ENCODE measurements at regions of chr19 and their contacts with region 1.

Region 1: GRCh38 chr19:7348587-7349230 is at the start of gene ARHGEF18:
- DNase-seq: peak; percentile 56
- ATAC-seq: peak; percentile 36
- H3K4me3 Mint-ChIP-seq: peak within 1 kb of the TSS; percentile 87
- H3K27ac Mint-ChIP-seq: peak within 1 kb of the TSS; percentile 95
- H3K4me1 Mint-ChIP-seq: peaks cover 90% of the 10 kb centered on the region
- H3K27me3 Mint-ChIP-seq: no peaks in the 10 kb centered on the region
- CTCF ChIP-seq: no peak
- total RNA-seq, gene ARHGEF18: 45.8 and 51.9 TPM in 2 replicates

Region 2: DNA sequence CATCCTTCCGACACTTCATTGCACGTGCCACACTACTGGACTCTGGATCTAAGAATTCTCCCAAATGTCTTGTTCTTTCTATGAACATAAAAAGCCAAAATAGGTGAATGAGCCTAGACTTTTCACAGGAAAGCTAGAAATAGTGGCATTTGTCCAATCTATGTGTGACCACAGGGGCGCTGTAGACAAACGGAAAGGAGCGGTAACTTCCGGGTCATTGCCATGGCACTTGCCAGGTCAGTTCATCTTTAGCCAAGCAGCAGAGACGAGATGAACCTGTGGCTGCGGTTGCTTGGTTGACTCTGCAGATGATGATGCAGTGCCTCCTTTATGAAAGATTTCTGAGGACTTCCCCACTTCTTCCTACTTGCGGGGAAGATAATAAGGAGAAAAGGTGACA is 395.8 kb before region 1 on chr19:
- CTCF ChIA-PET with region 1: no interaction called
- POLR2A ChIA-PET with region 1: no interaction called
- intact Hi-C with region 1: no loop called
- DNase-seq: no peak
- ATAC-seq: no peak
- H3K4me3 Mint-ChIP-seq: no peak overlapping the region
- H3K27ac Mint-ChIP-seq: no peak overlapping the region
- H3K4me1 Mint-ChIP-seq: no peaks in the 10 kb centered on the region
- H3K27me3 Mint-ChIP-seq: peaks cover 22% of the 10 kb centered on the region
- CTCF ChIP-seq: no peak

Region 3: GRCh38 chr19:7575434-7576040 is 226.8 kb after region 1 on chr19:
- CTCF ChIA-PET with region 1: no interaction called
- POLR2A ChIA-PET with region 1: no interaction called
- intact Hi-C with region 1: no loop called
- DNase-seq: no peak
- ATAC-seq: no peak
- H3K4me3 Mint-ChIP-seq: no peak overlapping the region
- H3K27ac Mint-ChIP-seq: no peak overlapping the region
- H3K4me1 Mint-ChIP-seq: no peaks in the 10 kb centered on the region
- H3K27me3 Mint-ChIP-seq: peaks cover 5% of the 10 kb centered on the region
- CTCF ChIP-seq: no peak

Region 4: DNA sequence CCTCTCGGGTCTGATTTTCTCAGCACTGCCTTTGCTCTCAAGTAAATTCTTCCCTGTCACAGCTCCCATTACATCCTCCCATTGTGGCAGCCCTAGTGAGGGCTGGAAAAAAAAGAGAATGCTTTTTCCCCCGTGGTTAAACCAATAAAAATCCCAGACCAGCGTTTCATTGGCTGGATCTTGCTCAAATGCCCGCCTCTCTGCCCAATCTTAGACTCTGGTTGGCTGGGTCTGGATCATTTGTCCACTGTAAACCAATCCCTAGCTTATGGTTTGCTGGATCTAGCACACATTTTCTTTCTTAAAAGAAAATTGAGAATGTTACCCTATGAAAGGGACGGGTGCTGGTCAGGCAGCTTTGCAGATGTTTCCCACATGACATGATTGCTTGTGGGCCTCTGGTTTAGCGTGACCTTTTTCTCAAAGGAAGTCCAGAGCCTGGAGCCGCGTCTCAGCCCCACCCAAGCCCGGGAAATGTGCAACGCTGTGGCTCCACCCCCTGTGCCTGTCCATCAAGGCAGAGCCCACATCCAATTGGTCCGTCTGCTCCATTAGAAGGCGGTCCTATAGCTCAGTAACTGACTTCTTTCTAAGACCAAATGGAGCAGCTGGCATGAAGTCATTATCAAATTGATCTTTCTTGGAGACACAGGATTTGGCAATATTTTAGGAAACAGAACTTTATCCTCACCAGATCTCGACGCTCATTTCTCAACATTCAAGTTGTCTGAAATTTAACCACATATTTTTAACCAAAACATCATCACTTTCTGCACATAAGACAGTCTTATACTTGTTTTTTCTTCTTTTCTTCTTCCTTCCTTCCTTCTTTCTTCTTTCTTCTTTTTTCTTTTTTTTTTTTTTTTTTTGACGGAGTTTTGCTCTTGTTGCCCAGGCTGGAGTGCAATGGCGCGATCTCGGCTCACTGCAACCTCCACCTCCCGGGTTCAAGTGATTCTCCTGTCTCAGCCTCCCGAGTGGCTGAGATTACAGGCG is 325.6 kb after region 1 on chr19:
- CTCF ChIA-PET with region 1: no interaction called
- POLR2A ChIA-PET with region 1: no interaction called
- intact Hi-C with region 1: loop called (anchors 10 kb)
- DNase-seq: no peak
- ATAC-seq: peak; percentile 16
- H3K4me3 Mint-ChIP-seq: no peak overlapping the region
- H3K27ac Mint-ChIP-seq: no peak overlapping the region
- H3K4me1 Mint-ChIP-seq: peaks cover 43% of the 10 kb centered on the region
- H3K27me3 Mint-ChIP-seq: peaks cover 43% of the 10 kb centered on the region
- CTCF ChIP-seq: no peak